ENCODE measurements at regions of chr11 and their contacts with region 1.

Region 1: GRCh38 chr11:34468209-34468841 is 29.6 kb downstream of the CAT start:
- DNase-seq: peak; percentile 48
- CTCF ChIP-seq: peak; percentile 75

Region 2: GRCh38 chr11:34174412-34175041 is 293.8 kb before region 1 on chr11:
- in situ Hi-C with region 1: loop called (anchors 25 kb)
- DNase-seq: peak; percentile 92
- CTCF ChIP-seq: peak; percentile 99

Region 3: GRCh38 chr11:34395916-34396550 is 72.3 kb before region 1 on chr11:
- in situ Hi-C with region 1: no loop called
- DNase-seq: no peak
- CTCF ChIP-seq: no peak

Measured in GM13977 (cell line).